Activated CD4-positive, alpha-beta T cell treated with anti-CD3 and anti-CD28 coated beads for 36 hours (primary cell): ENCODE measurements at regions of chr20 and their contacts with region 1.

Region 1: GRCh38 chr20:48760403-48760983 is 67.3 kb downstream of the PREX1 start:
- DNase-seq: peak; percentile 78
- ATAC-seq: peak; percentile 87
- H3K4me3 Mint-ChIP-seq: peak overlapping the region; percentile 34
- H3K27ac Mint-ChIP-seq: peak overlapping the region; percentile 96
- H3K4me1 Mint-ChIP-seq: peaks cover 67% of the 10 kb centered on the region
- H3K27me3 Mint-ChIP-seq: no peaks in the 10 kb centered on the region

Region 2: GRCh38 chr20:48679550-48680187 is 80.8 kb before region 1 on chr20:
- CTCF ChIA-PET with region 1: no interaction called
- POLR2A ChIA-PET with region 1: no interaction called
- intact Hi-C with region 1: no loop called
- DNase-seq: no peak
- ATAC-seq: no peak
- H3K4me3 Mint-ChIP-seq: no peak overlapping the region
- H3K27ac Mint-ChIP-seq: no peak overlapping the region
- H3K4me1 Mint-ChIP-seq: no peaks in the 10 kb centered on the region
- H3K27me3 Mint-ChIP-seq: no peaks in the 10 kb centered on the region

Region 3: GRCh38 chr20:48722737-48723191 is 37.7 kb before region 1 on chr20:
- CTCF ChIA-PET with region 1: no interaction called
- POLR2A ChIA-PET with region 1: no interaction called
- intact Hi-C with region 1: no loop called
- DNase-seq: peak; percentile 29
- ATAC-seq: no peak
- H3K4me3 Mint-ChIP-seq: no peak overlapping the region
- H3K27ac Mint-ChIP-seq: peak overlapping the region; percentile 71
- H3K4me1 Mint-ChIP-seq: peaks cover 37% of the 10 kb centered on the region
- H3K27me3 Mint-ChIP-seq: no peaks in the 10 kb centered on the region

Region 4: DNA sequence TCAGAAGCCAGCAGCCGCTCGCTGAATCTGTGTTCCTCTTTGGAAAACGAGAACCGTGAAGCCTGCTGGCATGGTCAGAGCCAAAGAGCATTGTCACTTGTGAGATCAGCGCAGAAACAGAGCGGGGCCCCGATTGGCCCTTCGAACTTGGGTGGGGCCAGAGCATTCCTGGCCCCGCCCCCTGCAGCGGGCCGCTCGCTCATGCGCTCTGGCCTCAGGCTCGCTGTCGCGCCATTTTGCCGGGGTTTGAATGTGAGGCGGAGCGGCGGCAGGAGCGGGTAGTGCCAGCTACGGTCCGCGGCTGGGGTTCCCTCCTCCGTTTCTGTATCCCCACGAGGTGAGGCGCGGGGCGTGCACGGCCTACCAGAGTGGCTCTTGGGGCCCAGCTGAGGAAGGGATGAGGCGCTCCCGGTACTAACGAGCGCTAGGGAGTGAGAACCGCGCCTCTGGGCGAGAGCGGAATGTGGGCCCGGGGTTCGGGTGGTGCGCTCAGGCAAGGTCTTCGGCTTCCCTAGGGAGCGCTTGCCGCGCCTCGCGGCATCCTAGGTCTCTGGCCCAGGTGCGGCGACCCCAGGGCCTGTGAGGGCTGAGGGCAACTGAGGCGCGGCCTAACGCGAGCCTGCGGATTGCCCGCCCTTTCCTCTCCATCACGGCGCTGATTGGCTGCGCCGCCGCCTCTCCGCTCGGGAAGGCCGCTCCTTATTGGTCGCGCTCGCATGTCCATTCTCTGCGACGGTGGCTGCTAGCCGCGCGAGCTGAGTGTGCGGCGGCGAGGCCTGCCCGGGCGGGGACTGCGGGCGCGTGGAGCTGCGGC is 285.8 kb after region 1 on chr20 and contains the start of gene CSE1L:
- CTCF ChIA-PET with region 1: no interaction called
- POLR2A ChIA-PET with region 1: no interaction called
- intact Hi-C with region 1: loop called in 1 of 2 experiments (anchors 5 kb)
- DNase-seq: peak; percentile 97
- ATAC-seq: peak; percentile 92
- H3K4me3 Mint-ChIP-seq: peak within 1 kb of the TSS; percentile 97
- H3K27ac Mint-ChIP-seq: peak within 1 kb of the TSS; percentile 99
- H3K4me1 Mint-ChIP-seq: peaks cover 30% of the 10 kb centered on the region
- H3K27me3 Mint-ChIP-seq: no peaks in the 10 kb centered on the region
- total RNA-seq, gene CSE1L: 119 to 126 TPM